ENCODE measurements at regions of chr22 and their contacts with region 1.

Region 1: DNA sequence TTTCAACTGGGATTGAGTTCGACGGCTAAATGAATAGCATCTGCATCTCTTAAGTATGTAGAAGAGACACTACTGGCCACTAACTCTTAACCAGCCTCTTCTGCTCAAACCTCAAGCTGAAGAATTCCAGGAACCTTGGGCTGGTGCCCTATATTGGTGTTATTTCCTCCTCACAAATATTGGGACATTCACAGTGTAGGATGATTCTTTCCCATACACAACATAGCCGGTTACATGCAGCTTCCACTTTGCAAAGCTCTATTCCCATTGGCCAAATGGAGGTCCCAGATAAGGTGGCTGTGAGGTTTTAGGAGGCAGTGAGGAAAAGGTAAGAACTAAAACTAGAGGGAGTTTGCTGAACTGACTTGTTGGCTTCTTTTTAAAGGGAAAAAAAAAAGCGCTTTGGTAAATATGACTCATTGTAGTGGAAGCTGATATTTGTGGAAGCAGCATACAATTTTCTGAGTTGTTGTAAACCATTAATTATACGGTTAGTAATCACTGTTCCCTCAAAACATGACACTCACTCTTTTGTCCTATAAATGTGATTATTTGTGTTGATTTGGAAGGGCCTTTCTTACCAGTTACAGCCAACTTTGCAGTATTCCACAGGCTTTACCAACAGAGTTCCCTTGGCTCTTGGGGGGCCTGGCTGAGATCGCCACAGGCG is 17.6 kb downstream of the C22orf31 start:
- DNase-seq: no peak
- ATAC-seq: no peak
- H3K4me3 ChIP-seq: no peak overlapping the region
- H3K27ac ChIP-seq: peak overlapping the region in 3 of 4 donors; percentile 15 to 51 (median 26)
- H3K4me1 ChIP-seq: peaks cover 10% of the 10 kb centered on the region
- H3K27me3 ChIP-seq: no peaks in the 10 kb centered on the region
- CTCF ChIP-seq: no peak
- POLR2A ChIP-seq: no peak

Region 2: GRCh38 chr22:28855355-28856094 is 188.5 kb before region 1 on chr22:
- intact Hi-C with region 1: loop called (anchors 2 kb)
- DNase-seq: peak; percentile 58 to 67 (median 62)
- ATAC-seq: peak; percentile 86
- H3K4me3 ChIP-seq: no peak overlapping the region
- H3K27ac ChIP-seq: no peak overlapping the region
- H3K4me1 ChIP-seq: peaks cover 3% of the 10 kb centered on the region
- H3K27me3 ChIP-seq: no peaks in the 10 kb centered on the region
- CTCF ChIP-seq: peak; percentile 71 to 98 (median 96)
- POLR2A ChIP-seq: peak in 1 of 3 donors; percentile 8

Region 3: DNA sequence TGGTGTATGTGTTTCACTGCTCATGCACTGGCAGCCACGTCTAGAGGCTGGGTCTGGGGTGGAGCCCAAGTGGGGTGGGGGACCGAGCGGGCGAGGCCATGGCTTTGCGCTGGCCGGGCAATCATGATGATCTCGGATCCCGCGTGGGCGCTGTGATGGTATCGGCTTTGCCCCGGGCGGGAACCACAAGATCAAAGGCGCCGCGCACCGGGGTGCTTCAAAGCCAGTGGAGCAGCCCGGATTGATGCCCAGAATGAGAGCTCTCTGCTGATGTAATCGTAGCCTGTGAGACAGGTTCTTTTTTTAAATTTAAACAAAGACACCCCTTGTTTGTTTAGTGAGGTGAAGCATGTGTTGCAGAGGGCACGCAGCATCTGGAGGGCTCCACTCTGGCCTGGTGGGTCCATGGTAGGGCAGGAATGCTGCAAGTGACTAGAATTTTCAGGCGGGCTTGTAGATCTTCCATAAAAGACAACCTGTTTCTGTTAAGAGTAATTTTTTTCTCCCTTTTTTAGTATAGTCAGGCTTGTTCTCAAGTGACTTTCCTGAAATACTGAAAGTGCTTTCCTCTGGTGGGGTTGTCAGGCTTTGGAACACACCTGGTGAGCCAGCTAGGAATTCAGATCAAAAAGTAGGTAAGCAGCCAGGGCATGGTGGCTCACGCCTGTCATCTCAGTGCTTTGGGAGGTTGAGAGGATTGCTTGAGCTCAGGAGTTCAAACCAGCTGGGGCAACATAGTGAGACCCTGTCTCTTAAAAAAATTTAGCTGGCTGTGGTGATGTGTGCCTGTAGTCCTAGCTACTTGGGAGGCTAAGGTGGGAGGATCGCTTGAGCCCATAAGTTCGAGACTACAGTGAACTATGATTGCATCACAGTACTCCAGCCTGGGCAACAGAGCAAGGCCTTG is 120.0 kb before region 1 on chr22:
- intact Hi-C with region 1: no loop called
- DNase-seq: peak; percentile 76 to 85 (median 84)
- ATAC-seq: peak; percentile 86
- H3K4me3 ChIP-seq: no peak overlapping the region
- H3K27ac ChIP-seq: peak overlapping the region in 3 of 4 donors; percentile 58 to 72 (median 69)
- H3K4me1 ChIP-seq: peaks cover 81% of the 10 kb centered on the region
- H3K27me3 ChIP-seq: no peaks in the 10 kb centered on the region
- CTCF ChIP-seq: no peak
- POLR2A ChIP-seq: no peak